ENCODE measurements at regions of chr14 and their contacts with region 1.

Region 1: DNA sequence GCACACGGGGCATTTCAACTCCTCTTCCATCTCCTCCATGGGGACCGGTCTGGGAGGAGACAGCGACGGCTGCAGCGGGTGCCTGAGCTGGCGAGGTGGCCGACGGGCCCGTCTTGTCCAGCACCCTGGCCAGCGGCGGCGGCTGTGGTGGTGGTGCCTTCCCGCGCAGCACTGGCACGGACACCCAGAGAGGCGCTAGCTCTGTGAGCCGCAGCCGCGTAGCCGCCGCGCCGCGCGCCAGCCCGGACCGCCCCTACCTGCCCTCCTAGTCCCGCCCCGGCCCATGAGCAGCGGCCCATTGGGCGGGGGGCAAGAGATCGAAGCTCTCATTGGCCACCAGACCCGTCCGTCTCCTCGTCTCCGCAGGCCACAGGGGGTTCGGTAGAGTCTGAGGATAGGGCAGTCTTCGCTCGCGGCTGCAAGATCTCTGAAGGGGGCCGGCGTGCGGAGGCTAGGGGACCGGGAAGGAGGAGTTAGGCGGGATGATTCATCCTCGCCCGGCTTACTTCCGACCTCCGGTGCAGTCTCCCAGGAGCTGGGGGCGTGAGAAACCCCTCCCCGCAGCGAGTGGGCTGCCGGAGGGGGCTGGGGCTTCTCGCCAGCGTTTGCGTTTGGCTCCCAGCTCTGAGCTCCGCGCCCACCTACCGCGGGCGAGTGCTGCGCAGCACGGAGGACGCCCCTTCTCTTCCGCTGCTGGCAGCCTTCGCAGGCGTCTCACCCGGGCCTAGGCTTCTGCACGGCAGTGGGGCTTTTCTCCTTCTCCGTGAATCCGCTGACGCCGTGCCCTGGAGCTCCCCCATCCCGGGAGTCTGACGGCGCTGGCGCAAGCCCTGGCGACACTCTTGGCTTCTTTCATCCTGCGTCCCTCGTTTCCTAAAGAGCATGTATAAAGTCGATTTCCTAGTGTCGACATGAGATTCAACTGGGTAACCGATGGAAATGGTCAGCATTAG is at the start of gene TRIM9:
- DNase-seq: peak; percentile 97 to 100 (median 99)

Region 2: GRCh38 chr14:51006781-51007211 is 88.4 kb before region 1 on chr14:
- intact Hi-C with region 1: loop called (anchors 5 kb)
- DNase-seq: peak; percentile 43 to 91 (median 58)

Region 3: DNA sequence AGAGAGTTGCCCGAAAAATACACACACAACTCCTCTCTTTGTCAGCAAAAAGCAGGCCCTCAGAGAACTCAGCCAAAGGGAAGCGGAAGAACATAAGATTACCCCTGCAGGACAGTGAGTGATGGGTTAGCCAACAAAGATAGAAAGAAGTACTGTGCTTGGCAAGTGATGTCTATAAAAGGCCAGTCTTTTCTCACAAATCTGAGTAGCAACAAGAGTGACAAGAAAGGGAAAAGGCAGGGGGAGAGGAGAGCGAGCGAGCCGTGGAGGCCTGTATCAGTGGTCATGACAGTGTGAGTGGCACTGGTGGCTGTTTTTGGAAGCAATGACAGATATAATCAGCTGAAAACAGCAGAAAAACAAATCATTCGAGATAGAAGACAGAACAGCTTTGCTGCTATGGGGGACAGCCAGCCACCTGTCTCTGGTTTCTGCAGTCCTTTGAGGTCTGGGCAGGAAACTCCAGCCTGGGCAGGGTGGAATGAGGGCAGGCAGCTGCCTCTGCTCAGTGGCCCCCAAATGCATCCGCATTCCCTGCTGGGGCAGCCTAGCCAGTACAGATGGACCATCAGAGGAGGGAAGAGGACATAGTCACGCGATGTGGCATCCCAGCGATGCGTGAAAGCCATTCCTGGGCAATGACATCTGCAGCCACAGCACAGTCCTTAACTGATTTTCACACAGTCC is 75.0 kb before region 1 on chr14:
- intact Hi-C with region 1: loop called (anchors 2 kb)
- DNase-seq: peak in 7 of 10 donors; percentile 36 to 90 (median 54)

Region 4: GRCh38 chr14:51219473-51220448 is 124.6 kb after region 1 on chr14:
- intact Hi-C with region 1: loop called (anchors 2 kb)
- DNase-seq: no peak

Measured in posterior cingulate gyrus (tissue), 11 donors.